ENCODE measurements at regions of chr1 and their contacts with region 1.

Region 1: DNA sequence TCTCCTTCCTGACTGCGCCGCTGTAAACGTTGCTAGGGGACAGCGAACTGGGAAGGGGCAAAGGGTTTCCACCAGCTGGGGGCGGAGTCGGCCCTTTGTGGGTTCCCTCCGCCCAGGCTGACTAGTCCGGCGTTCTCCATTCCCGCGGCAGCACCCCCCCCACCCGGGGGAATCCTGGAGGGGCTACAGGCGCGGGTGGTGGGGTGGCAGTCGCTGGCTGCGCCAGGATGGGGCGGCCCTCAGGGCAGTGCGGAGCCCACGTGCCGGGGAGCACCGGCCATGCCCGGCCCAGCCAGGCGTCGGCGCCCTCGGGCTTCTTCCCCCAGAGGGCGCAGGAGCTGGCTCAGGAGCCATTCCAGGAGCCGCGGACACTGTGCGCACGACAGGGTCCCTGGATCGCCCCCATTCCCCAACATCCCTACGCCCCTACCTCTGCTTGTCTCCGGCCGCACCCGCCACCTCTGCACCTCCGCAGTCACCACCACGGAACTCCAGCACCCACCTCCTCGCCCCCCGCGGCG is 476 bp downstream of the BATF3 start:
- DNase-seq: peak; percentile 67
- H3K4me3 Mint-ChIP-seq: peak overlapping the region; percentile 87
- H3K27ac Mint-ChIP-seq: no peak overlapping the region
- H3K4me1 Mint-ChIP-seq: peaks cover 38% of the 10 kb centered on the region
- H3K27me3 Mint-ChIP-seq: peaks cover 11% of the 10 kb centered on the region

Region 2: DNA sequence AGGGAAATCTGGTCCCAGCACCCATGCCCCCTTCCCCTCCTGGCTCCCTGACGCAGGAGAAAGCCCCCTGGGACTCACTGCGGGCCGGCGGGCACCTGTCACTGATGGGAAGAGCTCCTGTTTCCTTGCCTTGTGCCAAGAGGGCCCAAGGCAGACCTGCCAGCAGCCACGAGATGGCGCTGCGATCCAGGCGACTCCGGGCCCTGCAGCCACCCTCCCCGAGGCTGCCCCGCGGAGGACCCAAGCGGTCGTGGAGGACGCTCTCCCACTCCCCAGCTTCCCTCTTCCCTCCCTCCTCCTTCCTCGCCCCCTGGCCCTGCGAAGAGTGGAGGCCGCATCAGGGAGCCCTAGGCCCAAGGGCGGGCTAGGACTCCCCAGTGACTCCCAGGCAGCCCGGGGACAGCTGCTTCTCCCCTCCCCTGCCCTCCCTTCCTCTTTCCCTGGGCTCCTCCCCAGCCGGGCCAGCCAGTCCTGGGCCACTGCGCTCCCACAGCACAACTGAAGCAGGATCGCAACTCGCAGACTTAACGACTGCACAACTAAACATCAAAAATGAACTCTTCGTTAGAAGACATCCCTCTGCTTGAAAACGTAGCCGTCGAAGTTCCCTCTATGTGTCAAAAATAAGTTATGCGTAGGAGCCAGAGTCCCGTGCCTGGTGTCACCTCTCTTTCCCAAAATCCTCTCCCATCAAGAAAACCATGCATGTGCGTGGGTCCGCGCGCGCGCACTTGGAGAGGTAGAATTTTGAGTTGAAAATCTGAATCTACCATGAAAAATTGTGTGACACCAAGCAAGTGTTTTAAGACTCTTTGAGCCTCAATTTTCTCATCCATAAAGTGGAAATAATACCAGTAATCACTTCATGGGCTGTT is 33.7 kb before region 1 on chr1:
- CTCF ChIA-PET with region 1: interaction called, 5 read pairs
- intact Hi-C with region 1: loop called (anchors 1 kb)
- DNase-seq: peak; percentile 84
- H3K4me3 Mint-ChIP-seq: peak overlapping the region; percentile 70
- H3K27ac Mint-ChIP-seq: peak overlapping the region; percentile 56
- H3K4me1 Mint-ChIP-seq: peaks cover 5% of the 10 kb centered on the region
- H3K27me3 Mint-ChIP-seq: peaks cover 9% of the 10 kb centered on the region

Region 3: DNA sequence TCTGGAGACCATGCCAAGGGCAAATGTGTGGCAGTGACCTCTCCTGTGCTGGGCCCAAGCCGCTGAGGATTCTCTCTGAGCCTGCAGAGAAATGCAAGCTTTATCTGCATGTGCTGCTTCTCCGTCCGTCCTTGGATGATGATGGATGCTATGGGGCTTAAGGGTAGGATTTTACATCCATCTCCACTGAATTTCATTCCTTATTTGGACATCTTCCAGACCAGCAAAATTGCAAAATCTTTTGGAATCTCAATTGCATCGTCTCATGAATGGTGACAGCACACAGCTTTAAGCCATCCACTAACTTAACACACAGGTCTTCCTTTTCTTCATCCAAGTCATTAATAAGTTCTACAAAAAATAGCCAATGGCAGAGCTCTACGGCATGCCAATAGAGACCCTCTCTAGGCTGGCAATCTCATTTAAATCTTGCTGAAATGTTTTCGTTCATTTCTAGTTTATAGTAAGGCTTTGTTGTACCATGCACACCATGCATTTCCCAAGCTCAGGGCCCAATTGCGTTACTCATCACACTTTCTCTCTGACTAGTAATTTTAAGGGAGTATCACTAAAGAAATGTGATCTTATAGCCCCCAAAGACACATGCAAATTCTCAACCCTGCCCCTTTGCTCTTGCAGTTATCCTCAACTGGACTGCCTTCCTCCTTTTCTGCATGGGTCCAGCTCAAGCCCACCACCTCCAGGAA is 10.7 kb before region 1 on chr1:
- CTCF ChIA-PET with region 1: no interaction called
- intact Hi-C with region 1: no loop called
- DNase-seq: no peak
- H3K4me3 Mint-ChIP-seq: no peak overlapping the region
- H3K27ac Mint-ChIP-seq: no peak overlapping the region
- H3K4me1 Mint-ChIP-seq: peaks cover 6% of the 10 kb centered on the region
- H3K27me3 Mint-ChIP-seq: no peaks in the 10 kb centered on the region

Region 4: DNA sequence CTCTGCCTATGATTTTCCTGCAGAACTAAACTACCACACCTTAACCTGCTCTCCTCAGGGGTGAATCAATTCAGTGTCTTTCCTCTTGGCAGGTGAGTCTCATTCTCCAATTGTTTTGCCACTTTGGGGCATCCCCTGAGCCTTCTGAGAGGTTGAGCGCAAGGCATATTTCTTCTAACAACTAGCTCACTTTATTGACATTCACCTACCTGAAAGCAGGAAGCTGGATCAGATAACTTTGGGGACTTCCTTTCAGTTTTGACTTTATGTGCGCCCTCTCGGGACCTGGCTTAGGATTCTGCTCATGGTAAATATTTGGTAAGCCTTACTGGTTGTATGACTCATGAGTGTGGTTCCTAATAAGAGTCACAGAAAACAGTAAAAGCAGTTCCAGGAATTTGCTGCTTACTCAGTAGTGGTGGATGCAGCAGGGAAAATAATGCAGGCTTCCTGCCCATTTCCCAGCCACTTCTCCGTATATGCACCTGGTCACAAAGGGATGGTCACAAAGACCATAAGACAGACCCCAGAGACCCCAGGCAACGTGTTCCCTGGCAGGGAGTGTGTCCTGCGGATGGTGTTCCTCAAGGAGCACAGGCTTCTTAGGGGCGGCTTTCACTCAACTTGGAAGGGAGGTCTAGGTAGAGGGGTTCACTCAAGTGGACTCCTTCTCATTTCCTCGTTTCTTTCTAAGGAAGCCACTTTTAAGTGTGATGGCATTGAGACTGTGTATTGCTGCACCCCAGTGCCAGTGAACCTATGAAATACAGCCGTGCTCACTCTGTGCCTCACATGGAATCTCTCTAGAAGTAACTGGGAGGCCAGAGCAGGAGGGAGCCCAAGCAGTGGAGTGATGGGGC is 22.5 kb after region 1 on chr1:
- CTCF ChIA-PET with region 1: interaction called, 5 read pairs
- intact Hi-C with region 1: loop called (anchors 1 kb)
- DNase-seq: peak; percentile 71
- H3K4me3 Mint-ChIP-seq: no peak overlapping the region
- H3K27ac Mint-ChIP-seq: no peak overlapping the region
- H3K4me1 Mint-ChIP-seq: peaks cover 20% of the 10 kb centered on the region
- H3K27me3 Mint-ChIP-seq: no peaks in the 10 kb centered on the region

Region 5: DNA sequence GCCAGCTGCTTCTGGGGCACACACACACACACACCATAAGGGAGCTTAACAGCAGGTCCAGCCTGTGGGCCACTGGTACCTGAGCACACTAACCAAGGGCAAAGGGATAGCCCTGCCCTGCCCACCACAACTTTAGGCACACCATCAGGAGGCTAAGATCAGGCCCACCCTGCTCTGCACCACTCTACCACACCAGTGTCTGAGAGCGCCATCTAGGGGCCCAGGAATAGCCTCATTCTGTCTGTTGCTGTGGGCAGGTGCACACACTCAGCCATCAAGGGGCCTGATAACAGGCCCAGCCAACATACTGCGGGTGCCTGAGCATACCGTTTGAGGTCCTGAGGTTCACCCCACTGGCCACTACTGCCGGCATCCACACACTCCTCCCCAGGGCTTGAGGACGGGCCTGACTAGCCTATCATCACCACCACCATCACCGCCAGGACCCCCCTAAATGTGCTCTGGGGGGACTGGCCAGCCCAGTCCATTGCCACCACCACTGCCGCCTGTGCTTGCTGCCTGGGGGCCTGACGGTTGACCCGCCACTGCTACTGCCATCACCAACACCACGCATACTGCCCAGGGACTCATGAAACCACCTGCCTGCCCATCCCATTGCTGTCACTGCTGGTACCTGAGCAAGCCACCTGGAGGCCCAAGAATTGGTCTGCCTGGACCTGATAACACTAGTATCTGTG is 61.1 kb after region 1 on chr1:
- CTCF ChIA-PET with region 1: interaction called, 9 read pairs
- intact Hi-C with region 1: loop called (anchors 1 kb)
- DNase-seq: peak; percentile 75
- H3K4me3 Mint-ChIP-seq: no peak overlapping the region
- H3K27ac Mint-ChIP-seq: no peak overlapping the region
- H3K4me1 Mint-ChIP-seq: peaks cover 13% of the 10 kb centered on the region
- H3K27me3 Mint-ChIP-seq: no peaks in the 10 kb centered on the region

Region 6: GRCh38 chr1:212950243-212951125 is 251.3 kb after region 1 on chr1 and contains the start of gene VASH2:
- CTCF ChIA-PET with region 1: no interaction called
- intact Hi-C with region 1: no loop called
- DNase-seq: peak; percentile 80
- H3K4me3 Mint-ChIP-seq: peak within 1 kb of the TSS; percentile 77
- H3K27ac Mint-ChIP-seq: no peak within 1 kb of the TSS
- H3K4me1 Mint-ChIP-seq: peaks cover 8% of the 10 kb centered on the region
- H3K27me3 Mint-ChIP-seq: peaks cover 41% of the 10 kb centered on the region
- total RNA-seq, gene VASH2: 0.38 to 1.2 TPM

Region 7: DNA sequence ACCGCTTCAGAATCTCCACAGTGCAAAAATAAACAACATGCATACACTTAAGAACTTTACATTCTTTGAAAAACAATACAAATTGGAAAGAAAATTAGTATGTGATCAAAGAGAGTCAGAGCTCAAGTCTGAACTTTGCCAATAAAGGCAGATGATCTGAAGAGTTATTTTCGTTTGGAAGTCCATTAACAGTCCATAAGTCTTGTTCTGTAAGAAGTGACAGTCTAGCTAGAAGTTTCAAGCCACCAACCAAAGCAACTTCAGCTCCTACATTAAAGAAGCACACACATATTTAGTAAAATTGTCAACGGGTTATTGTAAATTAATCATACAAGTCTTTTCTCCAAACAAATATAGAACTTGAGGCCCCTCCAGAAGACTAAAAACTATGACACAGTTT is 295.8 kb after region 1 on chr1:
- CTCF ChIA-PET with region 1: interaction called, 5 read pairs
- intact Hi-C with region 1: loop called (anchors 1 kb)
- DNase-seq: no peak
- H3K4me3 Mint-ChIP-seq: no peak overlapping the region
- H3K27ac Mint-ChIP-seq: no peak overlapping the region
- H3K4me1 Mint-ChIP-seq: peaks cover 4% of the 10 kb centered on the region
- H3K27me3 Mint-ChIP-seq: no peaks in the 10 kb centered on the region

Measured in activated naive CD4-positive, alpha-beta T cell treated with anti-CD3 and anti-CD28 coated beads for 36 hours (primary cell).